Activated B cell treated with CpG ODN at 0.5 μM for 24 hours (primary cell): ENCODE measurements at regions of chr22 and their contacts with region 1.

Region 1: DNA sequence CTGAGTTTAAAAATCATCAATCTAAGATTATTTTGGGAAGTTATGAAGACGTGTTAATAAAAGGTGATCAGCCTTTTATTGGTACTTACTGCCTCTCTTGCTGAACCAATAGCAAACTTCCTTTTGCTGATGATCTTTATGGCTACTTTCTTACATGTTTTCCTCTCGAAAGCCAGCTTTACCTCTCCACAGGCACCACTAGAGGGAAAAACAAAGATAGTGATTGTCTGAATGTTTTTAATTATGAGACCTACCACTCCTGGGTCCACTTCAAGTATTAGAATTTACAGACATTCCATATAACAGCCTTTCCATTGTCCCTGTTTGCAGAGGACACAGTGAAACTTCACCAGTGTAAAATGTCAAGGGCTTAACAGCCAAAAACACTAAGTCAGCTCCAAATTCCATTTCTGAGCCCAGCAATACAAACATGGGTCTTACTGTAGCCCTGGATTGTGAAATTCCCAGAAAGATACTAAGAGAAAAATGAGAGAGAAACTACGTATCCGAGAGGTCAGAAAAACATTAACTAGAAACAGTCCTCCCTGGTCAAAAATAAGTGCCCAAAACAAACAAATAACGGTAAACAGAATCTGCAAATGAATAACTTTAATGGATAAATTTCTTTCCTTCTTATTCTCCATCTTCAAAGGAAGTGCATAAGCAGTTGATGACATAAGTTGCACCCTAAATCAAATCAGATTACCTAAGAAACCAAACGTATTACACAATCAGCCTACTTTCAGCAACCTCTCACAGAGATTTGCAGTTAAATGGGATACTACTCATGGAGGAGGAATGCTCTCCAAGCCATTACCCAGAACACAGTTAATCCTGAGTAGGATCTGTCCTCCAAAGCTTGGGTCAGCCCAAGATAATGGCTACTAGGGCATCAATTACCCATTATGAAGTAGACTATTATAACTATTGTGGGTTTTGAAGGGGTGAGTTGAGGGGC is 29.5 kb downstream of the CHEK2 start:
- DNase-seq: no peak
- ATAC-seq: no peak
- H3K4me3 Mint-ChIP-seq: no peak overlapping the region
- H3K27ac Mint-ChIP-seq: no peak overlapping the region
- H3K4me1 Mint-ChIP-seq: peaks cover 8% of the 10 kb centered on the region
- H3K27me3 Mint-ChIP-seq: no peaks in the 10 kb centered on the region
- CTCF ChIP-seq: no peak

Region 2: DNA sequence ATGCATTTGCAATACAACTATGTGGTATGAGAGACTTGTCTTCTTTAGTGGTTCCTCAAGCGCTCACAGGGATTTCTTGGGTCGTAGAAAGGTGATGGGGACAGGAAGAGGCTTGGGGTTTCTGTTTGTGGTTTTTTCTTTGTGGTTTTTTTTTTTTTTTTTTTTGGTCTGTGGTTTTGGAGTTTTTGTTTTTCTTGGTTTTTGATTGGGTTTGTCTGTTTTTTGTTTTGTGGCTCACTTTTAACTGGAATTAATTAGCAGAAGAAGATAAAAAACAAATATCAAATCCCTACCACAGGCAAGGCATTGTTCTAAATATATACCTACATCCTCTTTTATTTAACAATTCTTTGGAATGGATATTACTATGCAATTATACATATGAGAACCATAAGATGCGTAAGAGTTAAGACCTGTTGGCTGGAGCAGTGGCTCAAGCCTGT is 38.0 kb before region 1 on chr22:
- CTCF ChIA-PET with region 1: no interaction called
- POLR2A ChIA-PET with region 1: no interaction called
- intact Hi-C with region 1: loop called (anchors 5 kb)
- DNase-seq: no peak
- ATAC-seq: peak; percentile 71
- H3K4me3 Mint-ChIP-seq: peak overlapping the region; percentile 68
- H3K27ac Mint-ChIP-seq: peak overlapping the region; percentile 91
- H3K4me1 Mint-ChIP-seq: peaks cover 30% of the 10 kb centered on the region
- H3K27me3 Mint-ChIP-seq: peaks cover 28% of the 10 kb centered on the region
- CTCF ChIP-seq: no peak